ENCODE measurements at regions of chr16 and their contacts with region 1.

Region 1: GRCh38 chr16:30874821-30875717 is 18.8 kb downstream of the BCL7C start:
- DNase-seq: peak; percentile 85 to 89 (median 87)
- H3K4me3 ChIP-seq: peak overlapping the region; percentile 89 to 94
- H3K4me3 Mint-ChIP-seq: peak overlapping the region; percentile 92 to 99 (median 97)
- H3K27ac ChIP-seq: peak overlapping the region; percentile 84
- H3K27ac Mint-ChIP-seq: peak overlapping the region; percentile 91 to 99 (median 94)
- H3K4me1 ChIP-seq: peaks cover 23% of the 10 kb centered on the region
- H3K4me1 Mint-ChIP-seq: peaks cover 16 to 50% (median 31%) of the 10 kb centered on the region in 4 donors
- H3K27me3 ChIP-seq: no peaks in the 10 kb centered on the region
- H3K27me3 Mint-ChIP-seq: no peaks in the 10 kb centered on the region

Region 2: DNA sequence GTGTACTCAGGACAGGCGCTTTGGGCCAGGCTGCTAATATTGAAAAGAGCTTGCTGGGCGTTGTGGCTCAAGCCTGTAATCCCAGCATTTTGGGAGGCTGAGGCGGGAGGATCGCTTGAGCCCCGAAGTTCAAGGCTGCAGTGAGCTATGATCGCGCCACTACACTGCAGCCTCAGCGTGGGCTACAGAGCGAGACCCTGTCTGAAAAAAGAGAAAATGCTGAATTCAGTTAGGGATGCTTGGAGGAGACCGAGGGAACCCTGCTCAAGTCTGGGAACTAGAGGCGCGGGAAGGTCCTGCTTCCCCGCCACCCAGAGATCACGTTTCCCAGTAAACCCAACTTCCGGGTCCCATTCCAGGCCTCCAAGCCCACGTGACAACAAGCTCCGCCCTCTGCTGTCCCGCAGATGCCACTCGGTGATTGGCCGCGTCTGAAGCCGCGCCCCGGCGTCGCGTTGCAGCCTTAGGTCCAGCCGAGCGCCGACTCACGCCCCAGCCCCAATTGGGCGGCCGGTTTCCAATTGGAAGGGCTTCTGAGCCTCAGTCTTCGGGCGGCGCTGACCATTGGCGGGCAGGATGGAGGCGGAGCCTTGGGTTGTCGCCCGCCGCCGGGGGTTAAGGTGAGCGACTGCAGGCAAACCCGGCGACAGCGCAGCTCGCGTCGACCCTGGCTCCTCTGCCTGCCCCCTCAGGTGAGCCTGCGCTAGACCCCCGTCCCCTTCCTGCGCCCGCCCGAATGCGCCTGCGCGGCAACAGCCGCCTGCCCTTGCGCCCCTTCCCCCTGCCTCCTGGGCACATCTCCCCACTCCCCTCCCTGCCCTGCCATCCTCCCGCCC is 127.1 kb before region 1 on chr16 and contains the start of gene PHKG2:
- CTCF ChIA-PET with region 1: no interaction called
- POLR2A ChIA-PET with region 1: interaction called, 13 read pairs
- intact Hi-C with region 1: no loop called
- DNase-seq: peak; percentile 94 to 96 (median 95)
- H3K4me3 ChIP-seq: peak within 1 kb of the TSS; percentile 65 to 71
- H3K4me3 Mint-ChIP-seq: peak within 1 kb of the TSS; percentile 89 to 97 (median 91)
- H3K27ac ChIP-seq: peak within 1 kb of the TSS; percentile 60
- H3K27ac Mint-ChIP-seq: peak within 1 kb of the TSS; percentile 73 to 94 (median 89)
- H3K4me1 ChIP-seq: peaks cover 7% of the 10 kb centered on the region
- H3K4me1 Mint-ChIP-seq: peaks cover 14 to 33% (median 20%) of the 10 kb centered on the region in 4 donors
- H3K27me3 ChIP-seq: no peaks in the 10 kb centered on the region
- H3K27me3 Mint-ChIP-seq: no peaks in the 10 kb centered on the region
- total RNA-seq, gene PHKG2: 54.1 to 54.9 TPM

Region 3: DNA sequence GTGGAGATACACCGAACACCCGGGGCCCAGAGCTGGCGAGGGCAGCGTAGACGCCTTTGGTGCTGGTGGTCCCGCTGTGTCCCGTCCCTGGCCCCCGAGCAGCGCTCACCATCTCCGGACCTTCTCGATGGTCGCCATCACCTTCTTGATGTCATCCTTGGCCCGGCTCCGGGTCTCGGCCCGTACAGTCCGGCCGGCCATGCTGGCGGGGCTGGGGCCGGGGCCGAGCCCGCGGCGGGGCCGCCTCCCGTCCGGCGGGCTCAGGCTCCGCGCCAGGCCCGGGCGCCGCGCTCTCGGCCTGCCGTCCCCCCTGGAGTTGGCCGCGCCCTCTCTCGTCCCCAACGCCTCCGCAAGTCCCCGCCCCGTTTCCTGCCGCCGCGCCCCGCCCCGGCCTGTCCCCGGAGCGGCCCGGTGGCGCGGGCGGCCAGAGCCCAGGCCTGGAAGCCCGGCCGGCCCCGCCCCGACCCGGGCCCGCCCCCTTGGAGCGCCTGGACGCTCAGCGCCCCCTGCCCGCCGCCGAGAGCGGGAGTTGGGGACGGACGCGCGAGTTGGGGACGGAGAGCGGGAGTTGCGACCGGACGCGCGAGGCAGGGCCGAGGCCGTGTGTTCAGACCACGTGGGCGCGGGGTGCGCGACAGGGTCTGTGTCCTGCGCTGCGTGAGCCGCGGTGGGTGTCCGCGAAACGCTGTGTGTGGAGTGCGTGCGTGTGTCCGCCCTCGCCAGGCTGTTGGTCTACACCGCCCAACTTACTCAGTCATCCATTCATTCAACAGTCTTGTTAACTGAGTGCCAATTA is 18.9 kb after region 1 on chr16 and contains the start of gene BCL7C:
- CTCF ChIA-PET with region 1: interaction called, 3 read pairs
- POLR2A ChIA-PET with region 1: interaction called, 177 read pairs
- intact Hi-C with region 1: loop called (anchors 1 kb)
- DNase-seq: peak; percentile 63 to 82 (median 67)
- H3K4me3 ChIP-seq: peak within 1 kb of the TSS; percentile 52 to 75
- H3K4me3 Mint-ChIP-seq: peak within 1 kb of the TSS; percentile 85 to 95 (median 90)
- H3K27ac ChIP-seq: peak within 1 kb of the TSS; percentile 79
- H3K27ac Mint-ChIP-seq: peak within 1 kb of the TSS; percentile 85 to 97 (median 93)
- H3K4me1 ChIP-seq: peaks cover 35% of the 10 kb centered on the region
- H3K4me1 Mint-ChIP-seq: peaks cover 29 to 55% (median 43%) of the 10 kb centered on the region in 4 donors
- H3K27me3 ChIP-seq: no peaks in the 10 kb centered on the region
- H3K27me3 Mint-ChIP-seq: no peaks in the 10 kb centered on the region
- total RNA-seq, gene BCL7C: 25.5 to 27.3 TPM

Region 4: DNA sequence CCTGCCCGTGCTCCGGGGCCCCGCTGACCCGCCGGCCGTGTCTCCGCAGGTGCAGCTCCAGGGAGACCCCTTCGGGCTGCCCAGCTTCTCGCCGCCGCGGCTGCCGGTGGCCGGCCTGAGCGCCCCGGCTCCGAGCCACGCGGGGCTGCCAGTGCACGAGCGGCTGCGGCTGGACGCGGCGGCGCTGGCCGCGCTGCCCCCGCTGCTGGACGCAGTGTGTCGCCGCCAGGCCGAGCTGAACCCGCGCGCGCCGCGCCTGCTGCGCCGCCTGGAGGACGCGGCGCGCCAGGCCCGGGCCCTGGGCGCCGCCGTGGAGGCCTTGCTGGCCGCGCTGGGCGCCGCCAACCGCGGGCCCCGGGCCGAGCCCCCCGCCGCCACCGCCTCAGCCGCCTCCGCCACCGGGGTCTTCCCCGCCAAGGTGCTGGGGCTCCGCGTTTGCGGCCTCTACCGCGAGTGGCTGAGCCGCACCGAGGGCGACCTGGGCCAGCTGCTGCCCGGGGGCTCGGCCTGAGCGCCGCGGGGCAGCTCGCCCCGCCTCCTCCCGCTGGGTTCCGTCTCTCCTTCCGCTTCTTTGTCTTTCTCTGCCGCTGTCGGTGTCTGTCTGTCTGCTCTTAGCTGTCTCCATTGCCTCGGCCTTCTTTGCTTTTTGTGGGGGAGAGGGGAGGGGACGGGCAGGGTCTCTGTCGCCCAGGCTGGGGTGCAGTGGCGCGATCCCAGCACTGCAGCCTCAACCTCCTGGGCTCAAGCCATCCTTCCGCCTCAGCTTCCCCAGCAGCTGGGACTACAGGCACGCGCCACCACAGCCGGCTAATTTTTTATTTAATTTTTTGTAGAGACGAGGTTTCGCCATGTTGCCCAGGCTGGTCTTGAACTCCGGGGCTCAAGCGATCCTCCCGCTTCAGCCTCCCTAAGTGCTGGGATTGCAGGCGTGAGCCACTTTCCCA is 27.2 kb after region 1 on chr16:
- CTCF ChIA-PET with region 1: interaction called, 39 read pairs
- POLR2A ChIA-PET with region 1: interaction called, 177 read pairs
- intact Hi-C with region 1: loop called (anchors 2 kb)
- DNase-seq: peak; percentile 54 to 72 (median 58)
- H3K4me3 ChIP-seq: peak overlapping the region in 1 of 2 donors; percentile 68
- H3K4me3 Mint-ChIP-seq: peak overlapping the region; percentile 94 to 99 (median 96)
- H3K27ac ChIP-seq: peak overlapping the region; percentile 70
- H3K27ac Mint-ChIP-seq: peak overlapping the region; percentile 91 to 99 (median 98)
- H3K4me1 ChIP-seq: peaks cover 41% of the 10 kb centered on the region
- H3K4me1 Mint-ChIP-seq: peaks cover 19 to 47% (median 32%) of the 10 kb centered on the region in 4 donors
- H3K27me3 ChIP-seq: no peaks in the 10 kb centered on the region
- H3K27me3 Mint-ChIP-seq: no peaks in the 10 kb centered on the region